ENCODE measurements at regions of chr9 and their contacts with region 1.

Region 1: GRCh38 chr9:133999851-134000265 is 7.7 kb upstream of the VAV2 start:
- DNase-seq: no peak
- ATAC-seq: no peak
- H3K4me3 ChIP-seq: no peak overlapping the region
- H3K27ac ChIP-seq: no peak overlapping the region
- H3K4me1 ChIP-seq: no peaks in the 10 kb centered on the region
- H3K27me3 ChIP-seq: no peaks in the 10 kb centered on the region
- CTCF ChIP-seq: no peak
- POLR2A ChIP-seq: no peak

Region 2: DNA sequence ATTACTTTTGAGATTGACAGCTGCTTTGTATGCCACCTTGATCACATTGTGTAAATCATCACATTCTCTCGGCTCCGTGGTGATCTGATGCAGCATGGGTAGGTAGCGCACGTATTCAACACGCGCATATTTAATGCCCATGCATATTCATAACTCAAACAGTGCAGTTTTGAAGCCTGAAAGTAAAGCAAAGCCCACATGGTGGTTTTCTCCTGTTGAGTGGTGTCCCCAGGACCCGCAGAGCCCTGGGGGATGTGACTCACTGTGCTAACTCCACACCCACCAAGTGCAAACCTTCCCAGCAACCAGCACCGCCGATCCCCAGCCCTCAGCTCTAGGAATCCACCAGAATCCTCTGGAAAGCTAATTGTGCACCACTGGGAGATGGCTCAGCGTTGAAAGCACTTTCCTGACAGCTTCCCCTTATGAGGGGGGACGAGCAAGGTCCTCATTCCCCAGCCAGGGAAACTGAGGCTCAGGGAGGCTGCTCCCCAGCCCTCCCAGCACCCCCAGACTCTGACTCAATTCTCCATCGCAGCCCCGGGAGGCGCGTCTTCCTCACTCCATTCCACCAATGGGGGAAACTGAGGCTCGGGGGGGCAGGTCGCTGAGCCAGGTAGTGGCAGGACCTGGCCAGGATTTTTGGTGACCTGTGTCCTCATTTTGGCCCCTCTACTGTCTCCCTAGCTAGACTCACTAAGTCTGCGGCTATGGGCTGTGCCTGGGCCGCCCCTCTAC is 308.1 kb before region 1 on chr9:
- intact Hi-C with region 1: no loop called
- DNase-seq: peak in 2 of 3 donors; percentile 14 to 48
- ATAC-seq: peak in 2 of 4 donors; percentile 4 to 41
- H3K4me3 ChIP-seq: no peak overlapping the region
- H3K27ac ChIP-seq: no peak overlapping the region
- H3K4me1 ChIP-seq: peaks cover 0 to 11% (median 0%) of the 10 kb centered on the region in 4 donors
- H3K27me3 ChIP-seq: no peaks in the 10 kb centered on the region
- CTCF ChIP-seq: no peak
- POLR2A ChIP-seq: no peak

Region 3: DNA sequence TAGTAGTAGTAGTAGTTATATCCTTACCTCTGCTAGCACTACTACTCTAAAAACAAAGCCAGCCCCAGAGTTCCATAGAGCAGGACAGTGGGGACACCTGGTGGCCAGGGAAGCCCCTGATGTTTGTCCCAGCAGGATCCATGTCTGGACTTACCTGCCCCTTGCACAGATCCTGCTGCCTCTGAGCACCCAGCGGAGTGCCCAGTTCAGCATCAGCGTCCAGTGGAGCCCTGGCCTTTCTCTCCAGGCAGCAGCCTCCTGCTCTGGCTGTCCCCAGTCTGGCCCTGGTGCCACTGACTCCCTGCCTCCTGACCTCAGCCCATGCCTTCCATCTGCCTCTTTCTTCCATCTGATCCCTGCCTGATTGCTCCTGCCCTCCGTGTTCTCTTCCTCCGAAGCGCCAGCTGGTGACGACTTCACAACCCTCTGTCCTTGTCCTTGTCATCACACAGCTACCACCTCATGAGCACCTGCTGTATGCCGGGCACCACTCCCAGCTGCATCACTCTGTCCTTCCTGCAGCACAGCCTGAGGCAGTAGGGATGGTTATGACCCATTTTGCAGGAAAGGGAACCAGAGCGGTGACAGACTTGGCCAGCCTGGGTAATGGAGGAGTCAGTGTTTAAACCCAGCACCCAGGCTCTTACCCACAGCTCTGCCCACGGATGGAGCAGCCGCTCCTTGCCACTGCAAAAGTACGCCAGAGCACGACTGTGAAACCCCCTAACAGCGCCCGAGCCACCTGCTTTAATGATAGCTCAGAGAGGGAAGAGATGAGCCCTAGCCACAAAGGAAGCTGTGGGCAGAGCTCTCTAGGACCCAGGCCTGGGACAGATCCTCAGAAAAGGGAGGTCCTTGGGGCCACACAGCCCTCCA is 273.2 kb before region 1 on chr9:
- intact Hi-C with region 1: no loop called
- DNase-seq: peak; percentile 52 to 59 (median 58)
- ATAC-seq: peak; percentile 77 to 94 (median 82)
- H3K4me3 ChIP-seq: no peak overlapping the region
- H3K27ac ChIP-seq: no peak overlapping the region
- H3K4me1 ChIP-seq: no peaks in the 10 kb centered on the region
- H3K27me3 ChIP-seq: no peaks in the 10 kb centered on the region
- CTCF ChIP-seq: peak; percentile 43 to 59 (median 54)
- POLR2A ChIP-seq: no peak

Region 4: GRCh38 chr9:133787754-133788025 is 212.2 kb before region 1 on chr9:
- intact Hi-C with region 1: loop called (anchors 5 kb)
- DNase-seq: no peak
- ATAC-seq: peak in 1 of 4 donors; percentile 2
- H3K4me3 ChIP-seq: no peak overlapping the region
- H3K27ac ChIP-seq: no peak overlapping the region
- H3K4me1 ChIP-seq: peaks cover 0 to 20% (median 10%) of the 10 kb centered on the region in 4 donors
- H3K27me3 ChIP-seq: no peaks in the 10 kb centered on the region
- CTCF ChIP-seq: no peak
- POLR2A ChIP-seq: no peak

Region 5: DNA sequence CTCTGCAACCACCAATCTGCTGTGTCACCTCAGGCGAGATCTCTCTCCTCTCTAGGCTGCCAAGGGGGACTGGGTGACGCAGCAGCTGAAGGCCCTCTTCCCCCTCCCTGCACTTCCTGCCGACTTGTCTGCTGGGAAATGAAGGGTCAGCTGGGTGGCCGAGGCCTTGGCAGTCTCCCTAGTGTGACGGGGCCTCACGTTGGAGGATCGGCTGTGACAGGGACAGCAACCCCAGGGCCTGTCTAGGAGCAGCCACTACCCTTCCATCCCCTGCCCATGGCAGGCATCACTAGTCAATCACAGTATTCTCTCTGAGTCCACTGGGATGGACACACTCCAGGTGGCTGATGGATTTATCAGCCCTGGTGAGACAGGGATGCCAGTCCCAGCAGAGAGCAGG is 154.4 kb before region 1 on chr9:
- intact Hi-C with region 1: no loop called
- DNase-seq: peak; percentile 79 to 84 (median 84)
- ATAC-seq: peak; percentile 72 to 82 (median 76)
- H3K4me3 ChIP-seq: no peak overlapping the region
- H3K27ac ChIP-seq: peak overlapping the region; percentile 50 to 77 (median 62)
- H3K4me1 ChIP-seq: peaks cover 0 to 6% (median under 1%) of the 10 kb centered on the region in 4 donors
- H3K27me3 ChIP-seq: no peaks in the 10 kb centered on the region
- CTCF ChIP-seq: no peak
- POLR2A ChIP-seq: peak; percentile 42

Region 6: DNA sequence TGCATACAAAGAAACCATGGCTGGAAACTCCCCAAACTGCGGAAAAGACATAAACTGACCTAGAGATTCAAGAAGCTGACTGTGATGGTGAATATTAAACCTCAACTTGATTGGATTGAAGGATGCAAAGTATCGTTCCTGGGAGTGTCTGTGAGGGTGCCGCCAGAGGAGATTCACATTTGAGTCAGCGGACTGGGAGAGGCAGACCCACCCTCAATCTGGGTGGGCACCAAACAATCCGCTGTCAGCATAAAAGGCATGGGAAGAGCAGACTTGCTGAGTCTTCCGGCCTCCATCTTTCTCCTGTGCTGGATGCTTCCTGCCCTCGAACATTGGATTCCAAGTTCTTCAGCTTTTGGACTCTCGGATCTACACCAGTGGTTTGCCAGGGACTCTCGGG is 111.2 kb after region 1 on chr9:
- intact Hi-C with region 1: no loop called
- DNase-seq: peak in 1 of 3 donors; percentile 11
- ATAC-seq: no peak
- H3K4me3 ChIP-seq: no peak overlapping the region
- H3K27ac ChIP-seq: no peak overlapping the region
- H3K4me1 ChIP-seq: no peaks in the 10 kb centered on the region
- H3K27me3 ChIP-seq: no peaks in the 10 kb centered on the region
- CTCF ChIP-seq: no peak
- POLR2A ChIP-seq: no peak